ENCODE measurements at regions of chr19 and their contacts with region 1.

Region 1: DNA sequence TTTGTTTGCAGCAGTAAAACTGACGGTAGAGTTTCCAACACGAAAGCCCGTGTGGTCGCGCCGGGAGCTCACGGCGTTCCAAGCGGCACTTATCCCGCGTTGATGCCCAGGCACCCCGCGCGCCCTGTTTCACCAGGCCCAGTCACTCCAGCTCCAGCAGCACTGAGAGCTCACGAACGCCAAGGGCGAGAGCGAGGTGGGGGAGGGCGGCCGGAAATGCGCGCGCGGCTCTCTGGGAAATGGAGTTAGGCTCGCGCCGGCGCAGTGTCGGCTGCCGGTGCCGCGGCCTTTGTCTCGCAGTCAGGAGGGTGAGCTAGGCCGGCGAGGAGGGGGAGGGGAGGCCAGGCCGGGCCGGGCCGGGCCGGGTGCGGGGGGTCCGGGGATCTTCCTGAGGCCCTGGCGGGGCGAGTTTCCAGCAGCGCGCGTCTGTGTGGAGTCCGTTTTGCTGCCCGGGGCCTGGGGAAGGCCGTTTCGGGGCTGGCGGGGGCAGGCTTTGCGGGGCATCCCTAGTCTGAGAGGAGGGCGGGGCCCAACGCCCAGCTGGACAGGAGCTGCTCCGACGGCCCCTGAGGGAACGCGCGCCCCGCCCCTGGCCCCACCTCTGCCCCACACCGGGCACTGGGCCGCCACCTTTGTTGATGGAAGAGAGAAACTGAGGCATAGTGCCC is at the start of gene ZNF135:
- DNase-seq: peak; percentile 42 to 91 (median 72)
- ATAC-seq: peak; percentile 94 to 95
- H3K4me3 Mint-ChIP-seq: peak within 1 kb of the TSS; percentile 77 to 91 (median 86)
- H3K27ac Mint-ChIP-seq: peak within 1 kb of the TSS; percentile 60 to 97 (median 90)
- H3K4me1 Mint-ChIP-seq: peaks cover 6 to 12% (median 8%) of the 10 kb centered on the region in 4 donors
- H3K27me3 Mint-ChIP-seq: peaks cover 5 to 28% (median 17%) of the 10 kb centered on the region in 5 donors
- polyA plus RNA-seq, gene ZNF135: 0.79 to 4.3 (median 3.8) TPM

Region 2: DNA sequence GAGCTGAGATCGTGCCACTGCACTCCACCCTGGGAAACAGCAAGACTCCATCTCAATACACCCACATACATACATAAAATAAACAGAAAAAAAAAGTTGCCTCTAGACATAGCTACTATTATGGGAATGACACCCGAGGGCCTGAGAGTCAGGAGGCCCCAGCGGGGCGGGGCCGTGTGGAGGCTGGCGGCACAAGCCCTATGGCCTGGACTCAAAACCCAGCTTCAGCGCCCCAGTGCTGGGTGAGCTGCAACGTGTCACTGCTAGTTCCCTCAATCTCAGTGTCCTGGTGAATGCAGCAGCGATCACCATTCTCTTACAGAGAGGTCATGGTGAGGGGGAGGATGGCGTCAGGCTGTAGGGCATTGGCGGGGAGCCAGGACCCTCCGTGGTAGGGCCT is 34.5 kb before region 1 on chr19:
- POLR2A ChIA-PET with region 1: interaction called, 11 read pairs
- DNase-seq: no peak
- ATAC-seq: no peak
- H3K4me3 Mint-ChIP-seq: no peak overlapping the region
- H3K27ac Mint-ChIP-seq: no peak overlapping the region
- H3K4me1 Mint-ChIP-seq: peaks cover 0 to 3% (median 2%) of the 10 kb centered on the region in 4 donors
- H3K27me3 Mint-ChIP-seq: peaks cover 0 to 9% (median 2%) of the 10 kb centered on the region in 5 donors

Region 3: GRCh38 chr19:58097781-58098681 is 38.9 kb after region 1 on chr19 and contains the start of gene ZSCAN18:
- POLR2A ChIA-PET with region 1: interaction called, 20 read pairs
- DNase-seq: peak; percentile 97 to 100 (median 100)
- ATAC-seq: peak; percentile 88 to 90
- H3K4me3 Mint-ChIP-seq: peak within 1 kb of the TSS; percentile 82 to 96 (median 92)
- H3K27ac Mint-ChIP-seq: peak within 1 kb of the TSS; percentile 99 to 100 (median 100)
- H3K4me1 Mint-ChIP-seq: peaks cover 13 to 19% (median 18%) of the 10 kb centered on the region in 4 donors
- H3K27me3 Mint-ChIP-seq: peaks cover 0 to 2% (median 0%) of the 10 kb centered on the region in 5 donors
- polyA plus RNA-seq, gene ZSCAN18: 18.7 to 30.0 (median 27.4) TPM

Region 4: GRCh38 chr19:58154679-58155648 is 95.8 kb after region 1 on chr19:
- POLR2A ChIA-PET with region 1: interaction called, 17 read pairs
- DNase-seq: peak; percentile 93 to 100 (median 98)
- ATAC-seq: peak; percentile 77 to 91
- H3K4me3 Mint-ChIP-seq: peak overlapping the region; percentile 81 to 93 (median 82)
- H3K27ac Mint-ChIP-seq: peak overlapping the region; percentile 57 to 92 (median 84)
- H3K4me1 Mint-ChIP-seq: peaks cover 6 to 31% (median 20%) of the 10 kb centered on the region in 4 donors
- H3K27me3 Mint-ChIP-seq: no peaks in the 10 kb centered on the region

Measured in naive thymus-derived CD8-positive, alpha-beta T cell (primary cell).